Prostate gland (tissue), 2 donors: ENCODE measurements at regions of chr10 and their contacts with region 1.

Region 1: GRCh38 chr10:89643431-89644331 is 1.4 kb downstream of the PANK1 start:
- DNase-seq: peak; percentile 72
- H3K4me3 ChIP-seq: peak overlapping the region; percentile 64 to 67
- H3K27ac ChIP-seq: peak overlapping the region; percentile 60 to 78
- H3K4me1 ChIP-seq: no peaks in the 10 kb centered on the region
- H3K27me3 ChIP-seq: no peaks in the 10 kb centered on the region
- CTCF ChIP-seq: no peak
- POLR2A ChIP-seq: peak; percentile 83

Region 2: DNA sequence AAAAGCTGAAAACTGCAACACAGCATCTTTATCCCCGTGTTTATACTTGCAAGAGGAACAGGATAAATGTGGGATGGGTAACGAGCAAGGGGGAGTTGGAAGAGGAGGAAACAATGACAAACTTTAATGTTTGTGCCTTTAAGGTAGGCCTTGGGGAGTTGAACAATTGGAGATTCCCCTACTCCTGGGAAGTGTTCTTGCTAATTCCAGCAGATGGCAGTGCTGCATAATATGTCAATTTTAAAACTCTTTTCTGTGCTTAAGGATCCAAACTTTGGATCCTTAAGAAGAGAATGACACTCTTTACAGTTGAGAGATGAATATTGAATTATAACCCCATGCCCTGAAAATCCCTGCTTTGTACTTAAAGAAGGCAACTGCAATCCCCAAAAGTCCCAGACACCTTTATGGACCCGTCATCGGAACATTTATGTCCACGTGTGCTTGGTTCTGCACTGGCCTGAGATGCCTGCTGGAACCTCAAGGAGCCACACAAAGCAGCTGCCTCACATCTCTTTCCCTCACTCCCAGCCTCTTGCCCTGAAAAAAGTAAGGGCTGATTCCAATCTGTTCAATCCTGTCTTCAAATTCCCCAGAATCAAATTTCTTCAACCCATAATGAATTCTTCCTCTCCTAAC is 217.3 kb before region 1 on chr10:
- intact Hi-C with region 1: loop called (anchors 10 kb)
- DNase-seq: no peak
- H3K4me3 ChIP-seq: no peak overlapping the region
- H3K27ac ChIP-seq: no peak overlapping the region
- H3K4me1 ChIP-seq: no peaks in the 10 kb centered on the region
- H3K27me3 ChIP-seq: no peaks in the 10 kb centered on the region
- CTCF ChIP-seq: peak; percentile 56 to 80 (median 78)
- POLR2A ChIP-seq: no peak

Region 3: GRCh38 chr10:89701238-89702120 is 57.8 kb after region 1 on chr10 and contains the start of gene KIF20B:
- intact Hi-C with region 1: loop called (anchors 2 kb)
- DNase-seq: peak; percentile 95
- H3K4me3 ChIP-seq: peak within 1 kb of the TSS; percentile 54 to 57
- H3K27ac ChIP-seq: peak within 1 kb of the TSS; percentile 70 to 83
- H3K4me1 ChIP-seq: no peaks in the 10 kb centered on the region
- H3K27me3 ChIP-seq: no peaks in the 10 kb centered on the region
- CTCF ChIP-seq: peak in 3 of 4 experiments; percentile 58 to 60 (median 58)
- POLR2A ChIP-seq: peak; percentile 52
- total RNA-seq, gene KIF20B: 3.4 to 5.7 TPM